Activated CD4-positive, alpha-beta T cell treated with anti-CD3 and anti-CD28 coated beads, Interleukin-2, amount 10 ng/mL, durations not matched to agents 24 days and 14 days (primary cell): ENCODE measurements at regions of chr17 and their contacts with region 1.

Region 1: GRCh38 chr17:2054512-2055291 is at the start of gene HIC1:
- DNase-seq: peak; percentile 96
- H3K4me3 Mint-ChIP-seq: peak within 1 kb of the TSS; percentile 86
- H3K27ac Mint-ChIP-seq: peak within 1 kb of the TSS; percentile 88
- H3K4me1 Mint-ChIP-seq: peaks cover 22% of the 10 kb centered on the region
- H3K27me3 Mint-ChIP-seq: peaks cover 9% of the 10 kb centered on the region
- total RNA-seq, gene HIC1: 49.4 and 51.6 TPM in 2 replicates

Region 2: DNA sequence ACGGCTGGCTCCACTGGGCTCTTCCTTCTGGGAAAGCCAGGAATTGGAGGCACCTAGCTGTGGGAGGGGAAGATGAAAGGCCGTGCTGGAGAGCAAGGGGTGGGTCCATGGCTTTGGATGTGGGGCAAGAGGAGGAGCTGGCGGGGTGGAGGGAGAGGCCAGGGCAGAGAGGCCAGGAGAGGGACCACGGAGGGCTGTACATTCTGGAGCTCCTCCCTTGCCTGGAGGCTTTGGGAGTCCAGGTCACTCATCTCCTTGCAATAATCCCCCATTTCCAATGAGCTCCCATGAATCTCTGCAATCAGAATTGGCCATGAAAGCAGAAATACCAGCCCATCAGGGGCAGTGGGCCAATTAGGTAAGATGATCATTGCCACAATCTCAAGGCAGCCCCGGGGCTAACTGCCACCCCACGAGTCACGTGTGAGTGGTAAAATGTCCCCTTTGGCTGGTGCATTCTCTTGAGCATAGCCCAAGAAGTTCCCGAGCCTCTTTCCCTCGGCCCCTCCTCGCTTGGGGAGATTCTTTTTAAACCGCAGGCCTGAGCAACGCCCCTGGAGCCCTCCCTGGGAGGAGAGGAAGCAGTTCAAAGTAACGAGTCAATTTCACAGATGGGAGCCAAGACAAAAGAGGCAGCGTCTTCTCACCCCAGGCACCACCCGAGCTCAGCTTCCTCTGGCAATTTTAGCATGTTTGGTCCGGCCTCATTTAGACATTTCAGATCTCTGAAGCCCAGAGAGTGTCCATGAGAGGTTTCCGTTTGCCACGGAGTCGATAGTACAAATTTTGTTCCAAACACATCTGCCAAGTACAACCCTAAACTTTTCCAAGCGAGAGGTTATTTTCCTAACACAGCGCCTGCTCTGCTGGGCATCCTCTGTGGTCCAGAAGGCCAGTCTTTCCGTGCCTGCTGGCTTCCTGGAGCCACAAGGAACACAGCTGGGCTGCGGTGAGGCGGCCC is 43.0 kb before region 1 on chr17:
- intact Hi-C with region 1: no loop called
- DNase-seq: no peak
- H3K4me3 Mint-ChIP-seq: no peak overlapping the region
- H3K27ac Mint-ChIP-seq: no peak overlapping the region
- H3K4me1 Mint-ChIP-seq: no peaks in the 10 kb centered on the region
- H3K27me3 Mint-ChIP-seq: peaks cover 11% of the 10 kb centered on the region

Region 3: DNA sequence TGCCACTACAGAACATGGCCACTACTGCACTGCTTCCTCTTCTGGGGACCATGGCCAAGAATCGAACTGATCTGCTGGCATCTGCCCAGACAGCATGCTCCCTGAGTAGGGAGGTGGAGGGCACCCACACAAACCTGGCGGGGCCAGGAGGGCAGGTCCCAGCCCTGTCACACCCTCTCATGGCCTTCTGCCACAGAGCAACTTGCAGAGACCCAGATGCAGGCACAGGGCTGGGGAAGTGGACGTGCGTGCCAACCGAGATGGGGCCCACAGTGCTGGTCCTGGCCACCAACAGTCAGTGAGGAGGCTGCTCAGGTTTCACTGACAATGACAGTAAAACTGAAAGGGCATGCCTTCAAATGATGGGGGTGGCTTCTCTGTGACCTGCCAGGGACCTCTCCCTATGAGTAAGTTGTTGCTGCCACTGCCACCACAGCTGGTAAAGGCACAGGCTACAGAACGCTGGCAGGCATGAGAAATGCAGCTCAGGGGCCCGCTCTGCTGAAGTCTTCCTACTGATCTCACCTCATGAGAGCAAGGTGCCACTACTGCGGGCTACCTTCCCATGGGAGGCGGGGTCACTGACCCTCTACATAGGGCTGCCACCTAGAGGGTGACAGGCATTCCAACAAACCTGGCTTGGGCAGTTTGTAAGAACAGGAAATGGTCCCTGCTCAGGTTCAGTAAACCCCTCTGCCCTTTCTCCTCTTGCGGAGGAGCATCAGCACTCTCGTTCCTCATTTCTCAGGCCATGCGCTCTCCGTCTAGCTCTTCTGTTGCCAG is 15.7 kb after region 1 on chr17:
- intact Hi-C with region 1: loop called (anchors 2 kb)
- DNase-seq: peak; percentile 89
- H3K4me3 Mint-ChIP-seq: peak overlapping the region; percentile 74
- H3K27ac Mint-ChIP-seq: peak overlapping the region; percentile 97
- H3K4me1 Mint-ChIP-seq: peaks cover 58% of the 10 kb centered on the region
- H3K27me3 Mint-ChIP-seq: no peaks in the 10 kb centered on the region

Region 4: GRCh38 chr17:2282297-2282873 is 227.7 kb after region 1 on chr17:
- intact Hi-C with region 1: loop called (anchors 1 kb)
- DNase-seq: peak; percentile 76
- H3K4me3 Mint-ChIP-seq: no peak overlapping the region
- H3K27ac Mint-ChIP-seq: peak overlapping the region; percentile 76
- H3K4me1 Mint-ChIP-seq: peaks cover 36% of the 10 kb centered on the region
- H3K27me3 Mint-ChIP-seq: no peaks in the 10 kb centered on the region

Region 5: GRCh38 chr17:2303204-2304188 is 248.8 kb after region 1 on chr17 and contains the starts of genes SMG6 and SRR:
- intact Hi-C with region 1: loop called (anchors 1 kb)
- DNase-seq: peak; percentile 97
- H3K4me3 Mint-ChIP-seq: peak within 1 kb of the TSS; percentile 91
- H3K27ac Mint-ChIP-seq: peak within 1 kb of the TSS; percentile 84
- H3K4me1 Mint-ChIP-seq: peaks cover 35% of the 10 kb centered on the region
- H3K27me3 Mint-ChIP-seq: no peaks in the 10 kb centered on the region
- total RNA-seq, gene SMG6: 31.6 and 36.2 TPM in 2 replicates
- total RNA-seq, gene SRR: 13.8 and 15.6 TPM in 2 replicates

Region 6: GRCh38 chr17:2336215-2336851 is 281.6 kb after region 1 on chr17 and contains the start of gene TSR1:
- intact Hi-C with region 1: loop called (anchors 2 kb)
- DNase-seq: peak; percentile 98
- H3K4me3 Mint-ChIP-seq: no peak within 1 kb of the TSS
- H3K27ac Mint-ChIP-seq: peak within 1 kb of the TSS; percentile 96
- H3K4me1 Mint-ChIP-seq: peaks cover 14% of the 10 kb centered on the region
- H3K27me3 Mint-ChIP-seq: no peaks in the 10 kb centered on the region
- total RNA-seq, gene TSR1: 97.9 and 99.3 TPM in 2 replicates

Region 7: GRCh38 chr17:2392252-2393173 is 337.8 kb after region 1 on chr17:
- intact Hi-C with region 1: loop called (anchors 2 kb)
- DNase-seq: peak; percentile 100
- H3K4me3 Mint-ChIP-seq: peak overlapping the region; percentile 91
- H3K27ac Mint-ChIP-seq: peak overlapping the region; percentile 93
- H3K4me1 Mint-ChIP-seq: peaks cover 44% of the 10 kb centered on the region
- H3K27me3 Mint-ChIP-seq: no peaks in the 10 kb centered on the region